CD8-positive, alpha-beta T cell (primary cell): ENCODE measurements at regions of chr6 and their contacts with region 1.

Region 1: DNA sequence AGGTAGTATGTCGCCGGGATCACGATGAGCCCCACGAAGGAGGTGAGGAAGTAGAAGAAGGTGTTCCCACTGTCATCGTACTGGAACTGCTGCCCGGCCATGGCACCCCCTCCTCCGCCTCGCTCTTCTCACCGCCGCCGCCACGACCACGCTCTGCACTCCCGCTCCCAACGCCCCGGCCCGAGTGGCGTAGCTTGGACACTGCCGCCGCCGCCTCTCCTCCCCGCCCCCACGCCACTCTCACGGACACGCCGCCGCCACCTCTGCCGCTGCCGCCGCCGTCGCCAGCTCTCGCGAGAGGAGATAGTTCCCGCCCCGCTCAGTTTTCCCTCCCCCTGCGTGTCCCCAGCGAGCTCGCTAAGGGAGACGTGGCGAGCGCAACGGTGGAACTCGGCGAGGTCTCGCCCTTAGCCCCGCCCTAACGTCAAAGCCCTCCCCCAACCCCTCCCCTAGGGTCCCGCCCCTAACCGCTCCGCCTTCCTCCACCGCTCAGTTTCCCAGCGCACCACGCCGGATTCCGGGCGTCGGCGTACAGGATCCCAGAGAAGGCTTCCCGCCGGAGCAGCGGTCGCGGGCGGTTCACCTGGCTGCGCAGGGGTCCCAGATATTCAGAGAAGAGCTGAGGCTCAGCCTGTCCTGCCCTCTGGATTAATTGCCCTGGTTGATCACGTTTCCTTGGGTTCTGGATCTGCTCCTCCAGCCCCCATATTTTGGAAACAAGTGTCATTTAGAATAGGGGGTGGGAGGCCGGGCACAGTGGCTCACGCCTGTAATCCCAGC is at the start of gene SEC63:
- DNase-seq: peak; percentile 95 to 98 (median 96)
- ATAC-seq: peak; percentile 97
- H3K4me3 ChIP-seq: peak within 1 kb of the TSS; percentile 91
- H3K4me3 Mint-ChIP-seq: peak within 1 kb of the TSS; percentile 98
- H3K27ac ChIP-seq: peak within 1 kb of the TSS; percentile 81 to 82
- H3K27ac Mint-ChIP-seq: peak within 1 kb of the TSS; percentile 92
- H3K4me1 ChIP-seq: peaks cover 16% of the 10 kb centered on the region
- H3K4me1 Mint-ChIP-seq: peaks cover 37% of the 10 kb centered on the region
- H3K27me3 ChIP-seq: no peaks in the 10 kb centered on the region
- H3K27me3 Mint-ChIP-seq: no peaks in the 10 kb centered on the region
- CTCF ChIP-seq: no peak
- total RNA-seq, gene SEC63: 77.8 to 88.2 TPM

Region 2: DNA sequence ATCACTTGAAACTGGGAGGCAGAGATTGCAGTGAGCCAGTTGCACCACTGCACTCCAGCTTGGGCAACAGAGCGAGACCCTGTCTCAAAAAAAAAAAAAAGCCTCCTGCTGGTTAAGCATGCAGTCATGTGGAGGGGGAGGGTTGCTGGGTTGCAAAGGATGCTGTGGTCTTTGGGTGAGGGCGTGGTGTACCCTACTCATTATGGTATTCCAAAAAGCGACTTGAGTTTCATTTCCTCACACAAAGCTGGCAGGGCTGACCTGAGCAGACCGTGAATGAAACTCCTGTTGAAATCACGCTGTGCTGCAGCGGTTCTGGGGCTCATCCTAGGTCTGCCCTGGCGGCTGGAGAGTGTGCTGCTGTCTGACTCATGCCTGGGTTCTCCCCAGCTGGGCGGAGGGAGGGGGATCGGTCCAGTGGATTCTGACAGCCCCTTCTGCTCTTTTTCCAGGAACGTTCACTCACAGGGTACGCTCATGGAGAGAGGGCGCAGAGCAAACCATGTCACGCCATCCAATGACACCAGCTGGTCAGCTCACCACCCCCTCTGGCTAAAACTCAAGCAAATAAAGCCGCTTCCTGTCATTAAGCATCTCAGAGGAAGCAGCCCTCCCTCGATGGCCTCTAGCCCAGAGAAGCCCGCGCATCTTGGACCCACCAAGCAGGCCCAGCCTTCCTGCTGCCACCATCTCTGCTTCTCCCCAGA is 300.2 kb before region 1 on chr6:
- CTCF ChIA-PET with region 1: no interaction called
- POLR2A ChIA-PET with region 1: no interaction called
- intact Hi-C with region 1: loop called in 1 of 2 experiments (anchors 5 kb)
- DNase-seq: peak in 8 of 9 experiments; percentile 29 to 68 (median 52)
- ATAC-seq: peak; percentile 90
- H3K4me3 ChIP-seq: peak overlapping the region; percentile 27 to 49
- H3K4me3 Mint-ChIP-seq: peak overlapping the region; percentile 81
- H3K27ac ChIP-seq: peak overlapping the region; percentile 4 to 47
- H3K27ac Mint-ChIP-seq: peak overlapping the region; percentile 78
- H3K4me1 ChIP-seq: peaks cover 30% of the 10 kb centered on the region
- H3K4me1 Mint-ChIP-seq: peaks cover 35% of the 10 kb centered on the region
- H3K27me3 ChIP-seq: no peaks in the 10 kb centered on the region
- H3K27me3 Mint-ChIP-seq: no peaks in the 10 kb centered on the region
- CTCF ChIP-seq: no peak

Region 3: DNA sequence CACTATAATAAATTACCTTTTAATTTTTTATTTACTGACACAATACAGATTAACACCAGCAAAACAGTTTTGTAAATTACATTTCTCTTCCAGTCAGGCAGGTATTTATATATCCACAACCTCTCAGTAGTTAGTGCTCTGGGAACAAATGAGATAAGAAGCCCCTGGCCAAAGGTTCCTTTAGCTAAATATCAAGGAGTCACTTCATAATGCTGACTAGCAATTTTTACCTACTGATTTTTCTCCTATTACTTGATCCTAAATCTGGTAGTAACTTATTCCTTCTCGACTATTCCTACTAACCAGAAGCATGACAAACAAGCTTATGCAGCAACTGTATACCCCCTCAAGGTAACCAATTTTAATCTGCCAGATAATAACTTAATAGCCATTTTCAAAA is 46.4 kb before region 1 on chr6:
- CTCF ChIA-PET with region 1: no interaction called
- POLR2A ChIA-PET with region 1: no interaction called
- intact Hi-C with region 1: loop called in 1 of 2 experiments (anchors 5 kb)
- DNase-seq: no peak
- ATAC-seq: no peak
- H3K4me3 ChIP-seq: no peak overlapping the region
- H3K4me3 Mint-ChIP-seq: no peak overlapping the region
- H3K27ac ChIP-seq: no peak overlapping the region
- H3K27ac Mint-ChIP-seq: no peak overlapping the region
- H3K4me1 ChIP-seq: no peaks in the 10 kb centered on the region
- H3K4me1 Mint-ChIP-seq: no peaks in the 10 kb centered on the region
- H3K27me3 ChIP-seq: no peaks in the 10 kb centered on the region
- H3K27me3 Mint-ChIP-seq: no peaks in the 10 kb centered on the region
- CTCF ChIP-seq: no peak

Region 4: DNA sequence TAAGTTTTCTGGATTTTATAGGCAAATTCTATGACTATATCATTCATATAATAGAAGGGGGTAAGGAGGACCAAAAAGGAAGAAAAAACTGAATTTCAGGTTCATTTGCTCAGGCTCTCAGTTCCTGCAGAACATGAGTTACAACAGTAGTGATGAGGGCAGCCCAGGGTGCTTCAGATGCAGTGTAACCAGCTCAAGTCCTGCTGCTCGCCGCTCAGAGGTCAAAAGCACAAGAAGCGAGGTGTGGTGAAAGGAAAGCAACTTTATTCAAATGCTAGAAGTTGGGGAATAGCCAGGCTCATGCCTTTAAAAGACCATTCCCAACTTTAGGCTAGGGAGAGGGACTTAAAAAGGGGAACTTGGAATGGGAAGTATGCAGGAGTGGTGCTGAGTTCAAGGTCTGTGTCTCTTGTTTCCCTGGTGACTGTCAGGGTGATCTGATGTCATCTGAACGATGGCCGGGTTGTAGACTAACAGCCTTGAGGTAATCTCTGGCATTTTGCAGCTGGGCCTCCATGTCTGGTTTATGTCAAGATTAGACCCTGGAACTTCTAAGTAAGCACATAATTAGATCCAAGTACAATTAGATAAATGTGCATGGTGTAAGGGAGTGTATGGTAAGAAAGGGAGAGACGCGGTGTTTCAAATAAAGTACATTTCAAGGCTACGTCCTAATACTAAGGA is 14.5 kb after region 1 on chr6:
- CTCF ChIA-PET with region 1: no interaction called
- POLR2A ChIA-PET with region 1: no interaction called
- intact Hi-C with region 1: no loop called
- DNase-seq: no peak
- ATAC-seq: no peak
- H3K4me3 ChIP-seq: no peak overlapping the region
- H3K4me3 Mint-ChIP-seq: no peak overlapping the region
- H3K27ac ChIP-seq: no peak overlapping the region
- H3K27ac Mint-ChIP-seq: no peak overlapping the region
- H3K4me1 ChIP-seq: no peaks in the 10 kb centered on the region
- H3K4me1 Mint-ChIP-seq: peaks cover 2% of the 10 kb centered on the region
- H3K27me3 ChIP-seq: no peaks in the 10 kb centered on the region
- H3K27me3 Mint-ChIP-seq: peaks cover 2% of the 10 kb centered on the region
- CTCF ChIP-seq: no peak

Region 5: GRCh38 chr6:108294727-108295625 is 336.9 kb after region 1 on chr6 and contains the start of gene AFG1L:
- CTCF ChIA-PET with region 1: no interaction called
- POLR2A ChIA-PET with region 1: interaction called, 4 read pairs
- intact Hi-C with region 1: loop called (anchors 2 to 10 kb)
- DNase-seq: peak; percentile 72 to 92 (median 86)
- ATAC-seq: peak; percentile 92
- H3K4me3 ChIP-seq: peak within 1 kb of the TSS; percentile 94 to 96
- H3K4me3 Mint-ChIP-seq: peak within 1 kb of the TSS; percentile 89
- H3K27ac ChIP-seq: peak within 1 kb of the TSS; percentile 94 to 95
- H3K27ac Mint-ChIP-seq: peak within 1 kb of the TSS; percentile 97
- H3K4me1 ChIP-seq: peaks cover 13% of the 10 kb centered on the region
- H3K4me1 Mint-ChIP-seq: peaks cover 26% of the 10 kb centered on the region
- H3K27me3 ChIP-seq: no peaks in the 10 kb centered on the region
- H3K27me3 Mint-ChIP-seq: no peaks in the 10 kb centered on the region
- CTCF ChIP-seq: no peak
- total RNA-seq, gene AFG1L: 3.3 to 4.0 TPM